ENCODE measurements at regions of chr11 and their contacts with region 1.

Region 1: GRCh38 chr11:12087075-12088004 is 23.1 kb upstream of the MICAL2 start:
- DNase-seq: peak; percentile 79
- ATAC-seq: peak; percentile 94
- H3K4me3 Mint-ChIP-seq: peak overlapping the region; percentile 67
- H3K27ac Mint-ChIP-seq: peak overlapping the region; percentile 90
- H3K4me1 Mint-ChIP-seq: peaks cover 79% of the 10 kb centered on the region
- H3K27me3 Mint-ChIP-seq: no peaks in the 10 kb centered on the region

Region 2: DNA sequence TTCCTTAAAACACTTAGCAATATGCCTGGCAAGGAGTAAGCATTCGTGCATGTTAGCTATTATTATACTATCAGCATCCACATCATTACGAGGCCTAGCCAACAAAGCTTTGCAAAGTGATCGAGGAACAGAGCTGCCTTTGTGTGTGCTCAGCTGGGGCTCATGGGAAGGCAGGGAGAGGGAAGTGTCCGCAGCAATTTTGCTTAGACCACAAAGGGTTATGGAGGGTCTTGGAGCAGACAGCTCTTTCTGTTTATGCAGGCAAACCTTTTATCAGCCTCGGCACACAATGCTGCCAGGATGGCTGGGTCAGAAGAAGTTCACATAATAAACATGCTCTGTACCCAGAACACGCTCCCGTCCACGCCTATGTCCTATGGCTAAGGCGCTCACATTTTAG is 68.0 kb before region 1 on chr11:
- CTCF ChIA-PET with region 1: no interaction called
- POLR2A ChIA-PET with region 1: no interaction called
- DNase-seq: no peak
- ATAC-seq: no peak
- H3K4me3 Mint-ChIP-seq: no peak overlapping the region
- H3K27ac Mint-ChIP-seq: no peak overlapping the region
- H3K4me1 Mint-ChIP-seq: no peaks in the 10 kb centered on the region
- H3K27me3 Mint-ChIP-seq: peaks cover 37% of the 10 kb centered on the region

Region 3: DNA sequence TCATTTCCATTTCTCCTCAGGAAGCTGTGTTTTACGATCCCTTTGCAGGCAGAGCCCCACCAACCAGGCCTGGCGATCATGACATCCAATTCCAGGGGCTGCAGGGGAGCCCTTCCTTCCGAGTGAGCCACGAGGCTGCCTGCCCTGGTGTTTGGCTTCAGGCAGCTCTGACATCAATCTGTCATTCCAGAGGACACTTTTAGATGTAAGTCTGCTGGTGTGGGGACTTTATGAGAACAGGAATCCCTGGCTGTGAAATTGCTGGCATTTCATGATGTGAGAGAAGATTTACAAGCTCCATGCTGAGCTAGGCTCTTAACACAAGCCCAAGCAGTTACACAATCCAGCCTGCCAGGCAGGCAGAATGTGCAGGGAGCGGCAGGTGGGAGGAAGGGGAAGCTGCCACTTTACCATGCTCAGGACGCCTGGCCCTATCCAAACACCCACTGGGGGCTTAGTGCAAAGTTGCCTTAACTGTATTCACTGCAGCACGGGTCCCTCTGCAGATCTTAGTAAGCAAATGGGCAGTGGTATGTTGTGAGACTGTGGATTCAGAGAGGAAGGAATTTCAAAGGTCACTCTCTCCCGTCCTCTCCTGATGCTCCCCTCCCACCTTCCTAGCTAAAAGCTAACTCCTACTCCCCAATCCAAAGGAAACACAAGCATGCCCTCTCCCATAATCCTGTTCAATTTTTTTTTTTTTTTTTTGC is 20.4 kb before region 1 on chr11:
- CTCF ChIA-PET with region 1: interaction called, 11 read pairs
- POLR2A ChIA-PET with region 1: interaction called, 4 read pairs
- DNase-seq: no peak
- ATAC-seq: no peak
- H3K4me3 Mint-ChIP-seq: no peak overlapping the region
- H3K27ac Mint-ChIP-seq: no peak overlapping the region
- H3K4me1 Mint-ChIP-seq: peaks cover 16% of the 10 kb centered on the region
- H3K27me3 Mint-ChIP-seq: peaks cover 8% of the 10 kb centered on the region

Region 4: DNA sequence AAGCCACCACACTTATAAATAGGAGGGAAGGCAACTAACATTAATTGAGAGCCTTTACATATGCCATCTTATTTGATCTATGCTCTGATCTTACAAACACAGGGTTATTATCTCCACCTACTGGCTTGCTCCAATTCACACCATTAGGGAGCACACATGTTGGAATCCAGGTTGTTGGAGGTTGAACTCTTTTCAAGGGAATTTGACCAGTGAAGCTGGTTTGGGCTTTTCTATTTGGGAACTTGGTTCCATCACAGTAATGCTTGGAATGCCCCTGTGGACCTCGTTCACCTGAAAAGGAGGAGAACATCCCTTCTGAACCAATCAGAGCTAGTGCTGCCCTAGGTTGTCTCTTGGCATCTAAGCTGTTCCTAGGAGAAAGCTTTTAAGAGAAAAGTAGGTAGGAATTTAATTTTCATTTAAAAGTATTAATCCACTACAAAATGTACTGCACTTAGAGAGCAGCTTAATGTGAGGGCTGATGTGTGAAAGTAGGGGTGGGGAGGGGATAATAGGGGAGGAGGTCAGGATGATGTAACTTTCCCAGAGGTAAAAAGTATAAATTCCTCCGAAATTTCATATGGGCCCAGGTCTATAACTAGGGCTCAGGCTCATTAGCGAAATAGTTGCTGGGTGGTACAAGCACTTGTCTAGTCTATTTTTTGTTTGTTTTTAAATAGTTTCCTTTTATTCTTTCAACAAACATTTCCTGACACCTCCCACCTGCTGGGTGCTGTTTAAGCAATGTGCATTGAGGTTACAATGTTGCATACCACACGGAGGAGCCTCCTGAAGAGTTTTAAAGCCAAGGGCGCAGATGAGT is 15.5 kb after region 1 on chr11:
- CTCF ChIA-PET with region 1: interaction called, 12 read pairs
- POLR2A ChIA-PET with region 1: interaction called, 25 read pairs
- DNase-seq: no peak
- ATAC-seq: no peak
- H3K4me3 Mint-ChIP-seq: no peak overlapping the region
- H3K27ac Mint-ChIP-seq: no peak overlapping the region
- H3K4me1 Mint-ChIP-seq: peaks cover 27% of the 10 kb centered on the region
- H3K27me3 Mint-ChIP-seq: peaks cover 17% of the 10 kb centered on the region

Region 5: DNA sequence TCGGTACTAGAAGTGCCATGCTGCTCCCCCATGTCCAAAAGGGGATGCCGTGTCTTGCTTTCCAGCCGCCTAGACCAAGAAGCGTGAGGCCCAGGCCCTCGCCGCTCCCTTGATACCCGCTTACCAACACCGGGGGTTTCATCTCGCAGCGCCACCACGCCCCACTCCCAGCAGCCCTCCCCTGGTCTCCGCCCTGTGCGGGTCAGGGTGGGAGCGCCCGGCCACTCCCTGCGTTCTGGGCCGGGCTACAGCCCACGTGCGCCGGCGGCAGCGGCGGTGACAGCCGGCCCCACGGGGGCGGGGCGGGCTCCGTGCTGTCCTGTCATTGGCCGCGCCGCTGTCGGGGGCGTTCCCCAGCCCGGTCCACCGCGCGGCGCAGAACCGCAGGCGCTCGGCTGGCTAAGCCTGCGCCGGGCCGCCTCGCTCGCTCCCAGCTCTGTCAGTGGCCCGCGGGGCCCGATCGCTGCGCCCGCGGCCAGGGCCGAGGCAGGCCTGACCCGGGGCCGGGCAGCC is 22.9 kb after region 1 on chr11 and contains the start of gene MICAL2:
- CTCF ChIA-PET with region 1: interaction called, 12 read pairs
- POLR2A ChIA-PET with region 1: interaction called, 25 read pairs
- DNase-seq: peak; percentile 88
- ATAC-seq: peak; percentile 97
- H3K4me3 Mint-ChIP-seq: peak within 1 kb of the TSS; percentile 80
- H3K27ac Mint-ChIP-seq: peak within 1 kb of the TSS; percentile 89
- H3K4me1 Mint-ChIP-seq: peaks cover 47% of the 10 kb centered on the region
- H3K27me3 Mint-ChIP-seq: no peaks in the 10 kb centered on the region
- total RNA-seq, gene MICAL2: 34.9 to 37.5 TPM

Region 6: DNA sequence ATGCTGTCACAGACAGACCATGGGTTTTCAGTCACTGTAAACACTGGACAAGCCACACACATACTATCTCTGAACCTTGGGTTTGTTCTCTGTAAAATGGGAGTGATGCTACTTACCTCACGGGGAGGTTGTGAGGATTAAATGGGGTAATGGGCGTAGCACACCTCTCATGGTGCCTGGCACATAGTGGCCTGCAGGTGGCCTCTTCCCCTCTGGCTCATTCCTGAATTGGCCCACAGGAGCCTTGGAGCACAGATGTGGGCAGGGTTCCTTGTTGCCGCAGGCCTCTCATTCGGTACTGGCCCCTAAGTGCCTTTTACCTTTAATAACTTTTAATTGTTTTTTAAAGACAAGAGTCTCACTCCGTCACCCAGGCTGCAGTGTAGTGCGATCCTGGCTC is 34.7 kb after region 1 on chr11:
- CTCF ChIA-PET with region 1: interaction called, 11 read pairs
- POLR2A ChIA-PET with region 1: interaction called, 3 read pairs
- DNase-seq: no peak
- ATAC-seq: peak; percentile 40
- H3K4me3 Mint-ChIP-seq: no peak overlapping the region
- H3K27ac Mint-ChIP-seq: no peak overlapping the region
- H3K4me1 Mint-ChIP-seq: peaks cover 64% of the 10 kb centered on the region
- H3K27me3 Mint-ChIP-seq: no peaks in the 10 kb centered on the region

Region 7: GRCh38 chr11:12150831-12151382 is 63.6 kb after region 1 on chr11:
- CTCF ChIA-PET with region 1: interaction called, 14 read pairs
- POLR2A ChIA-PET with region 1: interaction called, 3 read pairs
- DNase-seq: peak; percentile 37
- ATAC-seq: peak; percentile 46
- H3K4me3 Mint-ChIP-seq: no peak overlapping the region
- H3K27ac Mint-ChIP-seq: peak overlapping the region; percentile 78
- H3K4me1 Mint-ChIP-seq: peaks cover 63% of the 10 kb centered on the region
- H3K27me3 Mint-ChIP-seq: no peaks in the 10 kb centered on the region